ENCODE measurements at regions of chr18 and their contacts with region 1.

Region 1: GRCh38 chr18:51110073-51110803 is 80.2 kb downstream of the SMAD4 start:
- DNase-seq: peak; percentile 67 to 79
- ATAC-seq: peak; percentile 82 to 95 (median 90)
- H3K4me3 ChIP-seq: no peak overlapping the region
- H3K27ac ChIP-seq: no peak overlapping the region
- H3K4me1 ChIP-seq: no peaks in the 10 kb centered on the region
- H3K27me3 ChIP-seq: no peaks in the 10 kb centered on the region
- CTCF ChIP-seq: peak; percentile 96

Region 2: DNA sequence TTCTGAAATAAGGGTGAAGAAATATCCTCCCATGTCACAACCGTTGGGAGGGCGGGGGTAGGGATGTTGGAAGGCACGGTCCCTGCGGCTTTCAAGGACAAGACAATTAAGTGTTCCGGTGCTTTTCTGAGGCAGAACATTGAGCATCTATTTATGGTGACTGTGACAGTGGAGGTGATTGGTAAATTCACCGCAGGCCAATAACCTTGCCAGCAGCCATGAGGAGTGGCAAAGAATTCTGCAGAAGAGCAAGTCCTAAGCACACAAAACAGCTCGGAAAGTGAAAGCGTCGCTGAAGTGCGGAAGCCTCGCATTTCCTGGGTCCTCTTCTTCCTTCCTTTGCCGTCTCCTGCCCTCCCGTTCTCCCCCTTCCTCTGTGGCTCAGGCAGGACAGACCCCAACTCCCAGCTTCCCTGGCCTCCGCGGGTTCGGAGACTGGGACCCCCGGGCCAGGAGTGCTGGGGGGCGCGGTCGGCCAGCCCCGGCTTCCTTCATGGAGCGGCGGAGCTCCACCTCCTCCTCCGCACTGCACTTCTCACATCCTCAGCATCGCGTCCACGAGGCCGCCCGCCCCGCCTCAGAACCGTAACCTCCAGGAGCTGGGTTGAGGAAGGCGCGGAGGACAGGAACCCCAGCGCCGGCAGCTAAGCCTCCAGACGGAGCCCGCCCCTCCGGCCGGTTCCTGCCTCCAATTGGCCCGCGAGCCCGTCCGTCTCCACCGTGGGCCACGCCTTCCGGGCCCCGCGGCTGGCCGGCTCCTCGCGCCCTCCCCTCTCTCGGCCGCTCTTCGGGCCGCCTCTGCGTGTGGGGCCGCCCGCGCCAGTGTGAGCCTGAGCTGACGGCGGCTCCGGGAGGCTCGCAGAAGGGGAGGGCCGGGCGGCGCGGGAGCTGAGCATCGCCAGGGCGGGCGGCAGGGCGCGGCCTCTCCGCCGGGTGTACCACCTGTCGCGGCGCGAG is 231.6 kb before region 1 on chr18 and contains the start of gene ME2:
- intact Hi-C with region 1: no loop called
- DNase-seq: peak; percentile 91 to 95
- ATAC-seq: peak; percentile 98 to 99 (median 98)
- H3K4me3 ChIP-seq: peak within 1 kb of the TSS; percentile 99
- H3K27ac ChIP-seq: peak within 1 kb of the TSS; percentile 90
- H3K4me1 ChIP-seq: peaks cover 14% of the 10 kb centered on the region
- H3K27me3 ChIP-seq: no peaks in the 10 kb centered on the region
- CTCF ChIP-seq: no peak
- total RNA-seq, gene ME2: 31.0 to 63.8 (median 52.3) TPM

Region 3: GRCh38 chr18:51197661-51198424 is 87.6 kb after region 1 on chr18 and contains the start of gene MEX3C:
- intact Hi-C with region 1: loop called in 1 of 2 experiments (anchors 5 kb)
- DNase-seq: peak; percentile 99 to 100
- ATAC-seq: peak; percentile 93 to 96 (median 94)
- H3K4me3 ChIP-seq: peak within 1 kb of the TSS; percentile 91
- H3K27ac ChIP-seq: peak within 1 kb of the TSS; percentile 91
- H3K4me1 ChIP-seq: peaks cover 26% of the 10 kb centered on the region
- H3K27me3 ChIP-seq: no peaks in the 10 kb centered on the region
- CTCF ChIP-seq: peak; percentile 46
- total RNA-seq, gene MEX3C: 13.6 to 15.1 (median 14.5) TPM

Region 4: DNA sequence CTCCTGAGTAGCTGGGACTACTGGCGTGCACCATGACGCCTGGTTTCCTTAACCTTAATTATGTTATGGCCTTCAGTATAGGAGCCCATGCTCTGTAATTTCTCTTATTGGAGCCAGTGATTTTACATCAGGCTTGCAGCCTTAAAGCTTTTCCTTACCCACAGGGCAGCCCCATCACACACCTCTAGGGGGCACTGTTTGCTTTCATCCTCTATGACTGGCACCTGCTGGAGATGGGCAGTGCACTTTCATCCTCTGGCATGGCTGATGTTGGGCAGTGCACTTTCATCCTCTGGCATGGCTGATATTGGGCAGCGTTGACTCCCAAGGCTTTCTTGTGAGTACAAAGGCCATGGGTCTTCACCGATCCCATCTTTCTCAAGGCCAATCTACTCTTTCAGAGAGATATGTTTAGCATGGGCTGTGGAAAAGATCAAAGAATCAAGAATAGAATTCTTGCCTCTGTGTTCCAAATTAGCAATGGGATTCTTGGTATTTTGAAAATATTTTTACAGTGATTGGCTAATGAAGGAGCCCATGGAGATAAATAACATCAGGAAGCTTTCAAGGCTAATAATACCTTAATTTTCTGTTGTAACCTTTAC is 167.9 kb after region 1 on chr18:
- intact Hi-C with region 1: no loop called
- DNase-seq: no peak
- ATAC-seq: peak; percentile 40 to 69 (median 54)
- H3K4me3 ChIP-seq: no peak overlapping the region
- H3K27ac ChIP-seq: no peak overlapping the region
- H3K4me1 ChIP-seq: peaks cover 11% of the 10 kb centered on the region
- H3K27me3 ChIP-seq: no peaks in the 10 kb centered on the region
- CTCF ChIP-seq: peak; percentile 50

Region 5: GRCh38 chr18:51383116-51383515 is 272.9 kb after region 1 on chr18:
- intact Hi-C with region 1: loop called (anchors 2 to 5 kb)
- DNase-seq: no peak
- ATAC-seq: peak in 2 of 4 donors; percentile 19 to 28
- H3K4me3 ChIP-seq: no peak overlapping the region
- H3K27ac ChIP-seq: no peak overlapping the region
- H3K4me1 ChIP-seq: no peaks in the 10 kb centered on the region
- H3K27me3 ChIP-seq: no peaks in the 10 kb centered on the region
- CTCF ChIP-seq: no peak

Region 6: DNA sequence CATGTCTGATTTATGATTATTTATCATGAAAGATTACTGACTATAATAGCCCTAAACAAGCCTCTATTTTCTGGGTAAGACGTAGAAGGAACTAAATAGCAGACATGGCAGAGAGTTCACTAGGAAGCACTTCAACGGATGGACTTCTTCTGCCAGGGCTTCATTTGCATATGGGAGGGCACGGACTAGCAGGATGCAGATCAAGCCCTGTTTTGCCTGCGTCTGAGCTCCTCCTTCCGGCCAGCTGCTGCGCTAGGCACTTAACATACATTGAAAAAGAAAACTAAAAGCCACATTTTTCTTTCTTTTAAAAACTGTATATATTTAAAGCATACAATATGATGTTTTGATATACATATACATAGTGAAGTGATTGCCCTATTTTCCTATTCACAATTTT is 427.2 kb after region 1 on chr18:
- intact Hi-C with region 1: loop called in 1 of 2 experiments (anchors 10 kb)
- DNase-seq: no peak
- ATAC-seq: no peak
- H3K4me3 ChIP-seq: no peak overlapping the region
- H3K27ac ChIP-seq: no peak overlapping the region
- H3K4me1 ChIP-seq: no peaks in the 10 kb centered on the region
- H3K27me3 ChIP-seq: no peaks in the 10 kb centered on the region
- CTCF ChIP-seq: peak; percentile 5

Region 7: GRCh38 chr18:51621113-51621863 is 511.1 kb after region 1 on chr18:
- intact Hi-C with region 1: loop called in 1 of 2 experiments (anchors 5 kb)
- DNase-seq: no peak
- ATAC-seq: no peak
- H3K4me3 ChIP-seq: peak overlapping the region; percentile 43
- H3K27ac ChIP-seq: no peak overlapping the region
- H3K4me1 ChIP-seq: no peaks in the 10 kb centered on the region
- H3K27me3 ChIP-seq: peaks cover 0 to 11% (median 2%) of the 10 kb centered on the region in 3 donors
- CTCF ChIP-seq: peak; percentile 63